Activated CD8-positive, alpha-beta memory T cell treated with anti-CD3 and anti-CD28 coated beads, Interleukin-2, amount 10 ng/mL, durations not matched to agents 7 days and 5 days (primary cell): ENCODE measurements at regions of chr6 and their contacts with region 1.

Region 1: GRCh38 chr6:149746147-149746946 is at the start of gene NUP43:
- DNase-seq: peak; percentile 97
- ATAC-seq: peak; percentile 71
- H3K4me3 Mint-ChIP-seq: peak within 1 kb of the TSS; percentile 100
- H3K27ac Mint-ChIP-seq: peak within 1 kb of the TSS; percentile 97
- H3K4me1 Mint-ChIP-seq: peaks cover 39% of the 10 kb centered on the region
- H3K27me3 Mint-ChIP-seq: no peaks in the 10 kb centered on the region
- total RNA-seq, gene NUP43: 67.7 to 75.3 TPM

Region 2: DNA sequence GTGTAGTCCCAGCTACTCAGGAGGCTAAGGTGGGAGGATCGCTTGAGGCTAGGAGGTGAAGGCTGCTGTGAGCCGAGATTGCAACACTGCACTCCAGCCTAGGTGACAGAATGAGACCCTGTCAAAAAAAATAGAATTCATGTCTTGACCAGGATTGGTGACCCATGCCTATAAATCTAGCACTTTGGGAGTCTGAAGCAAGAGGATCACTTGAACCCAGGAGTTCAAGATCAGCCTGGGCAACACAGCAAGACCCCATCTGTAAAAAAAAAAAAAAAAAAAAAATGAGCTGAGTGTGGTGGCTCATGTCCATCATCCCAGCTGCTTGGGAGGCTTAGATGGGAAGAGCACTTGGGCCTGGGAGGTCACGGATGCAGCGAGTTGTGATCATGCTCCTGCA is 145.8 kb before region 1 on chr6:
- CTCF ChIA-PET with region 1: no interaction called
- DNase-seq: no peak
- ATAC-seq: no peak
- H3K4me3 Mint-ChIP-seq: no peak overlapping the region
- H3K27ac Mint-ChIP-seq: no peak overlapping the region
- H3K4me1 Mint-ChIP-seq: no peaks in the 10 kb centered on the region
- H3K27me3 Mint-ChIP-seq: no peaks in the 10 kb centered on the region

Region 3: GRCh38 chr6:149717588-149718458 is 28.5 kb before region 1 on chr6 and contains the start of gene LATS1:
- CTCF ChIA-PET with region 1: interaction called, 14 read pairs
- DNase-seq: peak; percentile 96
- ATAC-seq: peak; percentile 91
- H3K4me3 Mint-ChIP-seq: peak within 1 kb of the TSS; percentile 92
- H3K27ac Mint-ChIP-seq: peak within 1 kb of the TSS; percentile 97
- H3K4me1 Mint-ChIP-seq: peaks cover 34% of the 10 kb centered on the region
- H3K27me3 Mint-ChIP-seq: no peaks in the 10 kb centered on the region
- total RNA-seq, gene LATS1: 28.5 to 33.1 TPM

Region 4: GRCh38 chr6:149777624-149778023 is 31.3 kb after region 1 on chr6:
- CTCF ChIA-PET with region 1: no interaction called
- DNase-seq: no peak
- ATAC-seq: no peak
- H3K4me3 Mint-ChIP-seq: no peak overlapping the region
- H3K27ac Mint-ChIP-seq: no peak overlapping the region
- H3K4me1 Mint-ChIP-seq: no peaks in the 10 kb centered on the region
- H3K27me3 Mint-ChIP-seq: no peaks in the 10 kb centered on the region